ENCODE measurements at regions of chr15 and their contacts with region 1.

Region 1: DNA sequence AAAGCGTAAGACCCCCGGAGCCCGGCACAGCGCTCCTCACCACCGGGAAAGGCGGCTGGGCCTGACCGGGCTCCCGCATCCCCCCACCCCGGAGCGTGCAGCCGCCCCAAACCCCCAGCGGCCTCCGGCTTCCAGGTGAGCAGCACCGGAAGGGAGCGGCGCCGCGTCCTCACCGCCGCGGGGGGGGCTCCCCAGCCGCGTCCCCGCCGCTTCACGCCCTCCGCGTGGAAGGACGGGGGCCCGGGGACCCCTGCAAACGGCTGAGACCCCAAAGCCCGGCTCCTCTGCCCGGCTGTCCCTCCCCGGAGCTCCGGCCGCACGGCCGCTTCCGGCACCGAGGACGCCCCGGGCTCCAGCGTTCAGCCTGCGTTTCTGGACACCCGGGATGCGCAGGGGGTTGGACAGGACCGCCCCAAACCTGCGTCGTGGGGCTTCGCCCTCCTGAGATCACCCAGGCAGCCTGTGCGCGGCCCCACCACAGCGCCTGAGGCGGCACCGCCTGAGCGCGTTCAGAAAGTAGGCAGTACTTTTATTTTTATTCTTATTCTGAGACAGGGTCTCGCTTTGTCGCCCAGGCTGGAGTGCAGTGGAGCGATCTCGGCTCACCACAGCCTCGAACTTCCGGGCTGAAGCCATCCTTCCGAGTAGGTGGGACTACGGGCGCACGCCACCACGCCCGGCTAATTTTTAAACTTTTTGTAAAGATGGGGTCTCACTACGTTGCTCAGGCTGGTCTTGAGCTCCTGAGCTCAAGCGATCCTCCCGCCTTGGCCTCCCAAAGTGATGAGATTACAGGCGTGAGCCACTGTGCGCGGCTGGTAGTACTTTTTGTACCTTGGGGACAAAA is 51.6 kb upstream of the BLM start:
- DNase-seq: peak; percentile 26 to 35 (median 29)
- H3K4me3 ChIP-seq: peak overlapping the region; percentile 51 to 88 (median 71)
- H3K4me3 Mint-ChIP-seq: peak overlapping the region; percentile 86 to 92
- H3K27ac ChIP-seq: peak overlapping the region; percentile 61 to 90
- H3K27ac Mint-ChIP-seq: peak overlapping the region in 6 of 7 donors; percentile 72 to 92 (median 85)
- H3K4me1 ChIP-seq: peaks cover 27 to 32% of the 10 kb centered on the region in 2 donors
- H3K4me1 Mint-ChIP-seq: peaks cover 36% of the 10 kb centered on the region
- H3K27me3 ChIP-seq: no peaks in the 10 kb centered on the region
- H3K27me3 Mint-ChIP-seq: peaks cover 0 to 8% (median 2%) of the 10 kb centered on the region in 3 donors
- CTCF ChIP-seq: no peak

Region 2: GRCh38 chr15:90530250-90531051 is 135.1 kb before region 1 on chr15:
- intact Hi-C with region 1: no loop called
- DNase-seq: peak in 2 of 3 donors; percentile 31 to 34
- H3K4me3 ChIP-seq: peak overlapping the region; percentile 54 to 82 (median 70)
- H3K4me3 Mint-ChIP-seq: peak overlapping the region; percentile 96 to 99
- H3K27ac ChIP-seq: peak overlapping the region in 1 of 2 donors; percentile 73
- H3K27ac Mint-ChIP-seq: peak overlapping the region in 5 of 7 donors; percentile 27 to 89 (median 84)
- H3K4me1 ChIP-seq: peaks cover 18 to 25% of the 10 kb centered on the region in 2 donors
- H3K4me1 Mint-ChIP-seq: peaks cover 40% of the 10 kb centered on the region
- H3K27me3 ChIP-seq: no peaks in the 10 kb centered on the region
- H3K27me3 Mint-ChIP-seq: peaks cover 5 to 14% (median 6%) of the 10 kb centered on the region in 3 donors
- CTCF ChIP-seq: no peak

Region 3: GRCh38 chr15:90603893-90604292 is 61.6 kb before region 1 on chr15:
- intact Hi-C with region 1: no loop called
- DNase-seq: peak; percentile 31 to 43 (median 43)
- H3K4me3 ChIP-seq: no peak overlapping the region
- H3K4me3 Mint-ChIP-seq: no peak overlapping the region
- H3K27ac ChIP-seq: no peak overlapping the region
- H3K27ac Mint-ChIP-seq: no peak overlapping the region
- H3K4me1 ChIP-seq: peaks cover 0 to under 1% of the 10 kb centered on the region in 2 donors
- H3K4me1 Mint-ChIP-seq: peaks cover 2% of the 10 kb centered on the region
- H3K27me3 ChIP-seq: no peaks in the 10 kb centered on the region
- H3K27me3 Mint-ChIP-seq: no peaks in the 10 kb centered on the region
- CTCF ChIP-seq: peak; percentile 71

Region 4: GRCh38 chr15:90701880-90702630 is 36.5 kb after region 1 on chr15:
- intact Hi-C with region 1: loop called in 1 of 2 experiments (anchors 5 kb)
- DNase-seq: peak; percentile 61 to 66 (median 64)
- H3K4me3 ChIP-seq: peak overlapping the region in 1 of 3 experiments; percentile 35
- H3K4me3 Mint-ChIP-seq: peak overlapping the region in 1 of 2 donors; percentile 78
- H3K27ac ChIP-seq: no peak overlapping the region
- H3K27ac Mint-ChIP-seq: peak overlapping the region in 6 of 7 donors; percentile 18 to 80 (median 79)
- H3K4me1 ChIP-seq: peaks cover 22 to 25% of the 10 kb centered on the region in 2 donors
- H3K4me1 Mint-ChIP-seq: peaks cover 38% of the 10 kb centered on the region
- H3K27me3 ChIP-seq: no peaks in the 10 kb centered on the region
- H3K27me3 Mint-ChIP-seq: peaks cover 0 to 3% (median 0%) of the 10 kb centered on the region in 3 donors
- CTCF ChIP-seq: peak; percentile 51

Measured in CD14-positive monocyte (primary cell).